Natural killer cell (primary cell): ENCODE measurements at regions of chr6 and their contacts with region 1.

Region 1: GRCh38 chr6:31597006-31597405 is 4.2 kb upstream of the NCR3 start:
- DNase-seq: peak in 1 of 2 donors; percentile 86
- ATAC-seq: peak; percentile 57 to 73 (median 58)
- H3K4me3 ChIP-seq: no peak overlapping the region
- H3K4me3 Mint-ChIP-seq: peak overlapping the region; percentile 60
- H3K27ac ChIP-seq: no peak overlapping the region
- H3K27ac Mint-ChIP-seq: peak overlapping the region; percentile 58 to 82
- H3K4me1 ChIP-seq: peaks cover 54% of the 10 kb centered on the region
- H3K4me1 Mint-ChIP-seq: peaks cover 23 to 44% of the 10 kb centered on the region in 2 donors
- H3K27me3 ChIP-seq: no peaks in the 10 kb centered on the region
- H3K27me3 Mint-ChIP-seq: no peaks in the 10 kb centered on the region
- CTCF ChIP-seq: peak; percentile 75

Region 2: GRCh38 chr6:31546962-31547726 is 49.9 kb before region 1 on chr6 and contains the start of gene NFKBIL1:
- intact Hi-C with region 1: loop called (anchors 1 kb)
- DNase-seq: peak; percentile 76 to 96
- ATAC-seq: peak; percentile 89 to 96 (median 91)
- H3K4me3 ChIP-seq: peak within 1 kb of the TSS; percentile 38
- H3K4me3 Mint-ChIP-seq: peak within 1 kb of the TSS; percentile 95
- H3K27ac ChIP-seq: peak within 1 kb of the TSS; percentile 87
- H3K27ac Mint-ChIP-seq: peak within 1 kb of the TSS; percentile 90 to 97
- H3K4me1 ChIP-seq: peaks cover 40% of the 10 kb centered on the region
- H3K4me1 Mint-ChIP-seq: peaks cover 32 to 41% of the 10 kb centered on the region in 2 donors
- H3K27me3 ChIP-seq: no peaks in the 10 kb centered on the region
- H3K27me3 Mint-ChIP-seq: no peaks in the 10 kb centered on the region
- CTCF ChIP-seq: peak; percentile 31
- total RNA-seq, gene NFKBIL1: 8.1 to 10.9 (median 10.7) TPM